ENCODE measurements at regions of chr12 and their contacts with region 1.

Region 1: GRCh38 chr12:3973978-3974644 is 100.9 kb upstream of the PARP11 start:
- DNase-seq: no peak
- ATAC-seq: no peak
- H3K4me3 ChIP-seq: no peak overlapping the region
- H3K27ac ChIP-seq: no peak overlapping the region
- H3K4me1 ChIP-seq: no peaks in the 10 kb centered on the region
- H3K27me3 ChIP-seq: no peaks in the 10 kb centered on the region
- CTCF ChIP-seq: no peak
- POLR2A ChIP-seq: no peak
- RAD21 ChIP-seq: no peak

Region 2: GRCh38 chr12:3896801-3897331 is 77.2 kb before region 1 on chr12:
- CTCF ChIA-PET with region 1: no interaction called
- POLR2A ChIA-PET with region 1: no interaction called
- dilution Hi-C with region 1: no loop called
- in situ Hi-C with region 1: no loop called
- intact Hi-C with region 1: loop called (anchors 10 kb)
- DNase-seq: no peak
- ATAC-seq: no peak
- H3K4me3 ChIP-seq: no peak overlapping the region
- H3K27ac ChIP-seq: no peak overlapping the region
- H3K4me1 ChIP-seq: no peaks in the 10 kb centered on the region
- H3K27me3 ChIP-seq: peaks cover 3% of the 10 kb centered on the region
- CTCF ChIP-seq: no peak
- POLR2A ChIP-seq: no peak
- RAD21 ChIP-seq: no peak

Region 3: DNA sequence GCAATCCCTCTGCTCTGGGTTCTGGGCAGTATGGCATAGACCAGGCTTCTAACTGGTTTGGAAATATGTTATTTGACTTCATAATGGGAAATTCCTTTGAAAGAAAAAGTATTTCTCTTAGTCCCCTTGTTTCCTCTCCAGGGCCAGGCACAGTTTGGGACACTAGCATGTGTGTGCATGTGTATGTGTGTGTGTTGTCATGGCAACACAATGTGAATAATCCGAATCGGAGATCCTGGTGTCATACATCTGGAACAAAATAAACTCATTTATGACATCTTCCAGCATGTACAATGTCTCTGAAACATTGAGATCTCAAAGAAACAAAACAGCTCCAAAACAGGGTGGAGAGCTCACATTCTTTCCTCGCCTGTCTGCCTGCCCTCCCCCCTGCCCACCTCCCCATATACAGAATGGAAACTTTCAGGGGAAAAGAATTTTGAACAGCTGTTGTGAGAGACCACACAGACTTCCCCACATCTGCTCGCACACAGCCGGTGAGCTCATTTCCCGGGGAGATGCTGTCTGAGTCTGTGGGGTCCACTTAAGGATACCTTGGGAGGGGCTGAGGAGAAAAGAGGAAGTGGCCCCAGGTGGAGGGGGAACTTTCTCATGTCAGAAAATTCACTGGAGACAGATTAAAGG is 45.4 kb before region 1 on chr12:
- CTCF ChIA-PET with region 1: no interaction called
- POLR2A ChIA-PET with region 1: no interaction called
- dilution Hi-C with region 1: no loop called
- in situ Hi-C with region 1: no loop called
- intact Hi-C with region 1: no loop called
- DNase-seq: no peak
- ATAC-seq: no peak
- H3K4me3 ChIP-seq: no peak overlapping the region
- H3K27ac ChIP-seq: no peak overlapping the region
- H3K4me1 ChIP-seq: no peaks in the 10 kb centered on the region
- H3K27me3 ChIP-seq: peaks cover 5% of the 10 kb centered on the region; the same call in 1 of the 2 replicates
- CTCF ChIP-seq: no peak
- POLR2A ChIP-seq: no peak
- RAD21 ChIP-seq: no peak